CD8-positive, alpha-beta T cell (primary cell): ENCODE measurements at regions of chr5 and their contacts with region 1.

Region 1: DNA sequence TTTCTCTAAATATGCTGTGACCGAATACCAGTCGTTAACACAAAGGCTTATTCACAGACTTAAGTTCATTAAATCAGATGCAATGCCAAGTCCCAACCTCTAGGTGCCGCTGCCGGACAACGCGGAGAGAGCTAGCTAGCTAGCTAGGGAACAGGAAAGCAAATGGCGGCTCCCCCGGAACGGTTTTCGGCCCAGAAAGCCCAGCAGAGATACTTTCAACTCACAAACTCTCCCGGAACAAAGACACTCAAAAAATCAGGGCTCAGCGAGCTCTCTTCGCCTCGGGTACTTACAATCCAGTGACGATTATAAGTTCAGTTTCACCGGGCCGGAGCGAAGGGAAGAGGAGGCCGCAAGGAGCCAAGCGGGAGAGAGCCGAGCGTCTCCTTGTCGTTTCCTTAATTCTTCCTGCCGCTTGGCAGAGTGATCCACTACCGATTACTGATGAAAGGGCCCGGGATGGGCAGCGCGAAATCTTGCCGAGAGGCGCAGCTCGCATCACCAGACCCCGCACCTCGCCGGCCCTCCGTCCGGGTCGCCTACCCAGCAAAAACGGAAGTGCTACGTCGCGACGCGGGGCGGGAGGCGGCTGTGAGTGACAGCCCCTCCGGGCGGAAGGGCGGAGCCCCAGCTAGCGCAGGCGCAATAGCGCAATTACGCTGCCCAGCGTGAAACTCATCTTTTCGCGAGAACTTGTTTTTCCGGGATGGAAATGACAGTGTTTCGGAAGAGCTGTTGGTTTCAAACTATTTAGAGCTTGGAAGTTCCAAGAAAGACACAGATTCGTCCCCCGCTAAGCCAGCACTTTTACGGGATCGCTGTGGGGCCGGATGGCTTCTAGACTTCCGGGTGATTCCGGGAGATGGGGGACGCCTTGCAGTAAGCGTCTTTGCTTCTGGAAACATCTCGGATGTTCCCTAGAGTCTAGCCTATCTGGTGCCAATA is at the start of gene TAF7:
- DNase-seq: peak; percentile 86 to 96 (median 91)
- ATAC-seq: peak; percentile 88
- H3K4me3 ChIP-seq: peak within 1 kb of the TSS; percentile 67 to 92
- H3K4me3 Mint-ChIP-seq: peak within 1 kb of the TSS; percentile 97
- H3K27ac ChIP-seq: peak within 1 kb of the TSS; percentile 90 to 99
- H3K27ac Mint-ChIP-seq: peak within 1 kb of the TSS; percentile 99
- H3K4me1 ChIP-seq: peaks cover 12% of the 10 kb centered on the region
- H3K4me1 Mint-ChIP-seq: peaks cover 28% of the 10 kb centered on the region
- H3K27me3 ChIP-seq: peaks cover 0 to 2% of the 10 kb centered on the region in 2 experiments
- H3K27me3 Mint-ChIP-seq: peaks cover 1% of the 10 kb centered on the region
- CTCF ChIP-seq: peak; percentile 94
- total RNA-seq, gene TAF7: 93.7 to 97.3 TPM

Region 2: GRCh38 chr5:140639148-140639979 is 681.1 kb before region 1 on chr5 and contains the start of gene TMCO6:
- CTCF ChIA-PET with region 1: no interaction called
- POLR2A ChIA-PET with region 1: no interaction called
- intact Hi-C with region 1: loop called in 1 of 2 experiments (anchors 10 kb)
- DNase-seq: peak; percentile 94 to 98 (median 97)
- ATAC-seq: peak; percentile 99
- H3K4me3 ChIP-seq: peak within 1 kb of the TSS; percentile 91 to 95
- H3K4me3 Mint-ChIP-seq: peak within 1 kb of the TSS; percentile 92
- H3K27ac ChIP-seq: peak within 1 kb of the TSS; percentile 72 to 93
- H3K27ac Mint-ChIP-seq: peak within 1 kb of the TSS; percentile 93
- H3K4me1 ChIP-seq: peaks cover 9% of the 10 kb centered on the region
- H3K4me1 Mint-ChIP-seq: peaks cover 30% of the 10 kb centered on the region
- H3K27me3 ChIP-seq: no peaks in the 10 kb centered on the region
- H3K27me3 Mint-ChIP-seq: no peaks in the 10 kb centered on the region
- CTCF ChIP-seq: peak; percentile 70
- total RNA-seq, gene TMCO6: 16.7 to 20.6 TPM

Region 3: GRCh38 chr5:141412854-141413539 is 92.5 kb after region 1 on chr5 and contains the start of gene PCDHGA10:
- CTCF ChIA-PET with region 1: no interaction called
- POLR2A ChIA-PET with region 1: no interaction called
- intact Hi-C with region 1: loop called (anchors 5 to 10 kb)
- DNase-seq: peak in 8 of 9 experiments; percentile 18 to 67 (median 50)
- ATAC-seq: peak; percentile 74
- H3K4me3 ChIP-seq: peak within 1 kb of the TSS; percentile 32 to 61
- H3K4me3 Mint-ChIP-seq: peak within 1 kb of the TSS; percentile 83
- H3K27ac ChIP-seq: no peak within 1 kb of the TSS
- H3K27ac Mint-ChIP-seq: no peak within 1 kb of the TSS
- H3K4me1 ChIP-seq: peaks cover 4% of the 10 kb centered on the region
- H3K4me1 Mint-ChIP-seq: peaks cover 18% of the 10 kb centered on the region
- H3K27me3 ChIP-seq: peaks cover 26 to 27% of the 10 kb centered on the region in 2 experiments
- H3K27me3 Mint-ChIP-seq: peaks cover 70% of the 10 kb centered on the region
- CTCF ChIP-seq: peak; percentile 82
- total RNA-seq, gene PCDHGA10: 0.08 TPM in 1 of 2 experiments, not detected in the other

Region 4: GRCh38 chr5:141524604-141525597 is 204.4 kb after region 1 on chr5:
- CTCF ChIA-PET with region 1: interaction called, 29 read pairs
- POLR2A ChIA-PET with region 1: interaction called, 4 read pairs
- intact Hi-C with region 1: loop called (anchors 1 kb)
- DNase-seq: peak in 8 of 9 experiments; percentile 15 to 72 (median 55)
- ATAC-seq: peak; percentile 85
- H3K4me3 ChIP-seq: no peak overlapping the region
- H3K4me3 Mint-ChIP-seq: no peak overlapping the region
- H3K27ac ChIP-seq: peak overlapping the region in 1 of 2 experiments; percentile 17
- H3K27ac Mint-ChIP-seq: peak overlapping the region; percentile 72
- H3K4me1 ChIP-seq: no peaks in the 10 kb centered on the region
- H3K4me1 Mint-ChIP-seq: peaks cover 16% of the 10 kb centered on the region
- H3K27me3 ChIP-seq: no peaks in the 10 kb centered on the region
- H3K27me3 Mint-ChIP-seq: no peaks in the 10 kb centered on the region
- CTCF ChIP-seq: peak; percentile 98

Region 5: DNA sequence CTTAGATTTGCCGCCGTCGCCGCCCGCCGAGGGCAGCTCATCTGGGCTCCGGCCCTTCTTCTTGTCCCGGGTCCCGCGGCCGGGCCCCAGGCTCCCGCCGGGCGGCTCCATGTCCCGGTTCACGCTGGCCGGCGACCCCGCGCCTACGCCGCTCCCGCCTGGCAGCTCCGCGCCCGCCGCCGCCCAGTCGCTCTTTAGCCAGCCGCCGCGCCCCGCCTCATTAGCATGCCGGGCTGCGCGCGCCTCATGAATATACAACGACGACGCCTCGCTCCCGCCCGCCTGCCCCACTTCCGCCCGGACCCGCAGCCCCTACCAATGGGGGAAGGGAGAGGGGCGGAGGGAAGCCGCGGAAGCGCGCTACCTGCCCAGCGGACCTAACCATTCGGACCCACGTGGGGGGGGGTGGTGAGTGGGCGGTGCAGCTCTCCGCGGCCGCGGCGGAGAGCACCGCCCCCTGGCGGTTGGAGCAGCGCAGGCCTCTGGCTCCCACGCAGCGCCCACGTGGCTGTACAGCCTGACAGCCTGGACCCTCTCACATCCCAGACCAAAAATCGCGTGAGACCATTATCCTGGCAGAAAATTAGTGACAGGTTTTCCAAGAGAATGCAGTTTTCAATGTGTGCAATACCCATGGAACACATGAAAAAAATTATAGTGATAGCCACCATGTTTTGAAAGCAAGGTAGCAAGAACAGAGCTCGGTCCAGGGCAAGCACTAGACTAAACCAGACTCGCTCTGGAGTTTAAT is 298.5 kb after region 1 on chr5 and contains the start of gene DIAPH1:
- CTCF ChIA-PET with region 1: interaction called, 6 read pairs
- POLR2A ChIA-PET with region 1: interaction called, 3 read pairs
- intact Hi-C with region 1: loop called (anchors 1 to 5 kb)
- DNase-seq: peak; percentile 95 to 99 (median 99)
- ATAC-seq: peak; percentile 91
- H3K4me3 ChIP-seq: peak within 1 kb of the TSS; percentile 90 to 95
- H3K4me3 Mint-ChIP-seq: peak within 1 kb of the TSS; percentile 97
- H3K27ac ChIP-seq: peak within 1 kb of the TSS; percentile 77 to 94
- H3K27ac Mint-ChIP-seq: peak within 1 kb of the TSS; percentile 97
- H3K4me1 ChIP-seq: peaks cover 31% of the 10 kb centered on the region
- H3K4me1 Mint-ChIP-seq: peaks cover 52% of the 10 kb centered on the region
- H3K27me3 ChIP-seq: no peaks in the 10 kb centered on the region
- H3K27me3 Mint-ChIP-seq: no peaks in the 10 kb centered on the region
- CTCF ChIP-seq: peak; percentile 88
- total RNA-seq, gene DIAPH1: 155 to 166 TPM